MCF 10A (cell line): ENCODE measurements at regions of chr2 and their contacts with region 1.

Region 1: GRCh38 chr2:174697255-174697654 is 67.0 kb downstream of the CHRNA1 start:
- DNase-seq: peak; percentile 69
- H3K4me3 Mint-ChIP-seq: no peak overlapping the region
- H3K27ac Mint-ChIP-seq: no peak overlapping the region
- H3K4me1 Mint-ChIP-seq: peaks cover 5% of the 10 kb centered on the region
- H3K27me3 Mint-ChIP-seq: no peaks in the 10 kb centered on the region
- CTCF ChIP-seq: peak; percentile 52

Region 2: DNA sequence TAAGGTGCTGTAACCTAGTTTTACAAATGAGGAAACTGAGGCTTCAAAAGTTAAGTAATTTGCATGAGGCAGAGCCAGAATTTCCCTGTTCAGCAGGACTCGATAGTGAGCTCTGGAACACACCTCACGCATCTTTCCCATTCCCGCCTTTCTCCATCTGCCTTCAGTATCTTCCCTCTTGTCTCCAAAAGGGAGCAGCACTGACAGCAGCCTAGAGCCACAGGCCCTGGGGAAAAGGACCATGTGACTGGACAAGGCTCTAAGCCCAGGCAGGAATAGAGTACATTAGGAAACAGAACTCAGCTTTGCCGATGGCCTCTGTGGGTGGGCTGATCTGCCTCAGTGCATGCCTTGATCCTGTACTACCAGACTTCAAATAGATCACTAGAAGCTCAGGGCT is 231.9 kb before region 1 on chr2:
- CTCF ChIA-PET with region 1: interaction called, 75 read pairs
- POLR2A ChIA-PET with region 1: interaction called, 3 read pairs
- intact Hi-C with region 1: loop called (anchors 1 kb)
- DNase-seq: no peak
- H3K4me3 Mint-ChIP-seq: no peak overlapping the region
- H3K27ac Mint-ChIP-seq: no peak overlapping the region
- H3K4me1 Mint-ChIP-seq: no peaks in the 10 kb centered on the region
- H3K27me3 Mint-ChIP-seq: no peaks in the 10 kb centered on the region
- CTCF ChIP-seq: no peak

Region 3: GRCh38 chr2:174536304-174536703 is 161.0 kb before region 1 on chr2:
- CTCF ChIA-PET with region 1: no interaction called
- POLR2A ChIA-PET with region 1: no interaction called
- intact Hi-C with region 1: no loop called
- DNase-seq: no peak
- H3K4me3 Mint-ChIP-seq: no peak overlapping the region
- H3K27ac Mint-ChIP-seq: no peak overlapping the region
- H3K4me1 Mint-ChIP-seq: no peaks in the 10 kb centered on the region
- H3K27me3 Mint-ChIP-seq: no peaks in the 10 kb centered on the region
- CTCF ChIP-seq: no peak

Region 4: GRCh38 chr2:174603280-174603679 is 94.0 kb before region 1 on chr2:
- CTCF ChIA-PET with region 1: interaction called, 15 read pairs
- POLR2A ChIA-PET with region 1: no interaction called
- intact Hi-C with region 1: no loop called
- DNase-seq: peak; percentile 58
- H3K4me3 Mint-ChIP-seq: no peak overlapping the region
- H3K27ac Mint-ChIP-seq: no peak overlapping the region
- H3K4me1 Mint-ChIP-seq: peaks cover 25% of the 10 kb centered on the region
- H3K27me3 Mint-ChIP-seq: no peaks in the 10 kb centered on the region
- CTCF ChIP-seq: peak; percentile 18

Region 5: GRCh38 chr2:174681099-174682006 is 15.9 kb before region 1 on chr2:
- CTCF ChIA-PET with region 1: interaction called, 110 read pairs
- POLR2A ChIA-PET with region 1: interaction called, 4 read pairs
- intact Hi-C with region 1: no loop called
- DNase-seq: no peak
- H3K4me3 Mint-ChIP-seq: peak overlapping the region; percentile 39
- H3K27ac Mint-ChIP-seq: no peak overlapping the region
- H3K4me1 Mint-ChIP-seq: peaks cover 6% of the 10 kb centered on the region
- H3K27me3 Mint-ChIP-seq: peaks cover 17% of the 10 kb centered on the region
- CTCF ChIP-seq: no peak

Region 6: DNA sequence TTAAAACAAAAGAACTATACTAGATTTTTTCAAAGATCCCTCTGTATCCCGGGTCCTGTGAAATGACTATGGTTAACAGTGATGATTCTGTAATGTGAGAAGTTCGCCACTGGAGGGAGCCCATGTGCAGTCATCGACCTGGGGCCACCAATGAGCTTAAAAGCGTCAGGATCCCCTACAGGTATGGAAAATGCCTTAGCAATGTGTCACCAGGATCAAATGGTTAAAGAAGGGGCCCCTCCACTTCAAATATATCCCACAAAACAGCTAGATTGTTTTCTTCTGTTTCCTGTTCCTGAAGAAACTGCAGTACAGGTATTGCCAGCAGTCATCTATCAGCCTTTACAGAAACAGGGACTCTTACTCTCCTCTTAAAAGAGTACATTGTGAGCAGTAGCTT is 51.7 kb after region 1 on chr2:
- CTCF ChIA-PET with region 1: interaction called, 9 read pairs
- POLR2A ChIA-PET with region 1: no interaction called
- intact Hi-C with region 1: loop called (anchors 2 kb)
- DNase-seq: peak; percentile 81
- H3K4me3 Mint-ChIP-seq: no peak overlapping the region
- H3K27ac Mint-ChIP-seq: no peak overlapping the region
- H3K4me1 Mint-ChIP-seq: peaks cover 5% of the 10 kb centered on the region
- H3K27me3 Mint-ChIP-seq: no peaks in the 10 kb centered on the region
- CTCF ChIP-seq: peak; percentile 67

Region 7: GRCh38 chr2:174985630-174986029 is 288.4 kb after region 1 on chr2:
- CTCF ChIA-PET with region 1: interaction called, 15 read pairs
- POLR2A ChIA-PET with region 1: no interaction called
- intact Hi-C with region 1: loop called (anchors 2 kb)
- DNase-seq: peak; percentile 45
- H3K4me3 Mint-ChIP-seq: no peak overlapping the region
- H3K27ac Mint-ChIP-seq: no peak overlapping the region
- H3K4me1 Mint-ChIP-seq: peaks cover 5% of the 10 kb centered on the region
- H3K27me3 Mint-ChIP-seq: no peaks in the 10 kb centered on the region
- CTCF ChIP-seq: peak; percentile 58

Region 8: DNA sequence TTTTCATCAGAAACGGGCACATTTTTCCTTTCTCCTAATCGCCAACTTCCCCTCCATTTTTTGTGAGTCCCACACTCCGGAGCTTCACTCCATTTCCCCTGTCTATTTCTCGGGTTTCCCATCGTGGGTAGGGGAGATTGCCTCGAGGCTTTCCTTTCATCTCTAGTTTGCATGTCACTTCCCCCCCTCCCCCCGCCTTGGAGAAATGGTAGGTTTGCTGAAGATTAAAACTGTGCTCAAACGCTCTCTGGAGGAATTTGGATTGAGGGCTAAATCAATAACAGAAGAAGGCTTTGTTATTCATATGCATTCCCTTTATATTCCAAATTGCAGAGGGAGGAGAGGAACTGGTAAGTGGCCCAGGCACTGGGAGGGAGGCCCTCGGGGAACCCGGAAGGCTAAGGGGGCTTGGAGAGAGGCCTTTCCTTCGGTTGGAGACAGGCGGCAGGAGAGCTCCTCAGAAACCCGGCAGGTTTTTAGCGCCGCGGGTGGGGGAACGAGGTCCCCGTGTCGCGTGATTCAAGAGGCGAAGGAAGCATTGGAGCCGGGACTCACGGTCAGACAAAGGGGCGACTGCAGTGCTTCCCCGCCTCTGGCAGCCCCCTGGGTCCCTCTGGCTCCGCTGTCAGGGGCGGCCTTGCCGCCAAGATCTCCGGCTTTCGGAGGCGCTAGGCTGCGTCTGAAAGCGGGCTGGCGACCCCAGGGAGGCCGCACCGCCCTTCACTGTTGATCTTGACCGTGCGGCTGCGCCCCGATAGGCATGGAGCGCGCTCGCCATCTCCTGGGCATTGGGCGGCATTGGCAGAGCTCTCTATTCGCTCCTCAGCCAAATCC is 1399.9 kb after region 1 on chr2:
- CTCF ChIA-PET with region 1: interaction called, 3 read pairs
- POLR2A ChIA-PET with region 1: interaction called, 3 read pairs
- intact Hi-C with region 1: loop called (anchors 5 kb)
- DNase-seq: peak; percentile 89
- H3K4me3 Mint-ChIP-seq: peak overlapping the region; percentile 77
- H3K27ac Mint-ChIP-seq: peak overlapping the region; percentile 71
- H3K4me1 Mint-ChIP-seq: peaks cover 13% of the 10 kb centered on the region
- H3K27me3 Mint-ChIP-seq: peaks cover 47% of the 10 kb centered on the region
- CTCF ChIP-seq: peak; percentile 92